Mammary epithelial cell (primary cell): ENCODE measurements at regions of chr1 and their contacts with region 1.

Region 1: GRCh38 chr1:25944986-25945385 is 38.8 kb upstream of the STMN1 start:
- DNase-seq: no peak
- H3K4me3 ChIP-seq: no peak overlapping the region
- H3K27ac ChIP-seq: no peak overlapping the region
- H3K4me1 ChIP-seq: no peaks in the 10 kb centered on the region
- H3K27me3 ChIP-seq: no peaks in the 10 kb centered on the region
- CTCF ChIP-seq: no peak

Region 2: DNA sequence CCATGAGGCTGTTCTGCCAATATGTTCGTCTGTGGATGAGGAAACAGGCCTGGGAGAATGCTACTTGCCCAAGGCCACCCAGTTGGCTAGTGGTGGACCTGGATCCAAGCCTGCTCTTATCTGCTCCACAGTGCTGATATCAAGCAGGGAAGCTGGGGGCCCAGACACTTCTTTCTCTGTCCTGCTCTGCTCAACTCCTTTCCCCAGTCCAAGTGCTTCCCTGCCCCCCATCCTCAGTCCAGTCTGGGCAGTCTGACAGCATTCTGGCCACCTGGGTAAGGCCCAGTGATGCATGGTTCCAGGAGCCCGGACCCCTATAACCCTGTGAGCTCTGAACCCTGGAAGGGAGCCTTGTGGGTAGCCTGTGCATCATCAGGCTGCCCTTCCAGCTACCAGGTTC is 65.3 kb before region 1 on chr1:
- CTCF ChIA-PET with region 1: no interaction called
- dilution Hi-C with region 1: no loop called
- in situ Hi-C with region 1: no loop called
- intact Hi-C with region 1: no loop called
- DNase-seq: no peak
- H3K4me3 ChIP-seq: no peak overlapping the region
- H3K27ac ChIP-seq: no peak overlapping the region
- H3K4me1 ChIP-seq: peaks cover 15% of the 10 kb centered on the region
- H3K27me3 ChIP-seq: no peaks in the 10 kb centered on the region
- CTCF ChIP-seq: no peak

Region 3: GRCh38 chr1:26027716-26028489 is 82.9 kb after region 1 on chr1:
- CTCF ChIA-PET with region 1: interaction called, 11 read pairs
- dilution Hi-C with region 1: no loop called
- in situ Hi-C with region 1: no loop called
- intact Hi-C with region 1: no loop called
- DNase-seq: peak; percentile 27
- H3K4me3 ChIP-seq: no peak overlapping the region
- H3K27ac ChIP-seq: no peak overlapping the region
- H3K4me1 ChIP-seq: no peaks in the 10 kb centered on the region
- H3K27me3 ChIP-seq: no peaks in the 10 kb centered on the region
- CTCF ChIP-seq: no peak